ENCODE measurements at regions of chr7 and their contacts with region 1.

Region 1: GRCh38 chr7:157397731-157398691 is 61.2 kb downstream of the DNAJB6 start:
- DNase-seq: peak in 1 of 2 donors; percentile 62
- ATAC-seq: peak; percentile 54 to 87 (median 73)
- H3K4me3 ChIP-seq: peak overlapping the region in 2 of 10 donors; percentile 1 to 2
- H3K27ac ChIP-seq: peak overlapping the region; percentile 53 to 86 (median 77)
- H3K4me1 ChIP-seq: peaks cover 6 to 53% (median 35%) of the 10 kb centered on the region in 9 donors
- H3K27me3 ChIP-seq: no peaks in the 10 kb centered on the region
- CTCF ChIP-seq: peak in 8 of 9 donors; percentile 12 to 60 (median 46)

Region 2: DNA sequence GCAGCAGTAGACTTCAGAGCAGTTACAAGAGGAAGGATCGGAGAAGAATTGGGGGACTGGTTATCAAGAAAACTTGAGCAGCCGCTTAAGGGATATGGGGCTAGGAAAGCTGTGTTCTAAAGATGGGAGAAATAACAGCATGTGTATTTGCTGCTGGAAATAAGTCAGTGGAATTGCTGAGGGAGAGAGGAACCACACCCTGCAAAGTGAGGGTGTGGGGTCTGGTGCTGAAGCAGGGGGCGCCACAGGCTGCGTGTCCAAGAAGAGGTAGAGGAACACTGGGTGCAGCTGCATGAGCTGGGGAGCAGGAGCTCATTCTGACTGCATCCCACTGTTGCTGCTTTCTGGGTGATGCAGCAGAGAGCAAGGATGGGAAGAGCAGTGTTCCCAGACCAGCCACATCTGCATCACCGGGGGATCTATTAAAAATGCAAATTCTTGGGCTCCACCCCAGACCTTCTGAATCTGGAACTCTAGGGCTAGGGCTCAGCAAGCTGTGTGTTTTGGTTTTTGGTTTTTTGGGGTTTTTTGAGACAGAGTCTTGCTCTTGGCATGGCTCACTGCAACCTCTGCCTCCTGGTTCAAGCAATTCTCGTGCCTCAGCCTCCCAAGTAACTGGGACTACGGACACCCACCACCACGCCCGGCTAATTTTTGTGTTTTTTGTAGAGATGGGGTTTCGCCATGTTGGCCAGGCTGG is 158.3 kb before region 1 on chr7:
- intact Hi-C with region 1: loop called in 1 of 10 experiments (anchors 10 kb)
- DNase-seq: no peak
- ATAC-seq: peak in 1 of 8 donors; percentile 12
- H3K4me3 ChIP-seq: no peak overlapping the region
- H3K27ac ChIP-seq: no peak overlapping the region
- H3K4me1 ChIP-seq: no peaks in the 10 kb centered on the region
- H3K27me3 ChIP-seq: no peaks in the 10 kb centered on the region
- CTCF ChIP-seq: no peak

Region 3: DNA sequence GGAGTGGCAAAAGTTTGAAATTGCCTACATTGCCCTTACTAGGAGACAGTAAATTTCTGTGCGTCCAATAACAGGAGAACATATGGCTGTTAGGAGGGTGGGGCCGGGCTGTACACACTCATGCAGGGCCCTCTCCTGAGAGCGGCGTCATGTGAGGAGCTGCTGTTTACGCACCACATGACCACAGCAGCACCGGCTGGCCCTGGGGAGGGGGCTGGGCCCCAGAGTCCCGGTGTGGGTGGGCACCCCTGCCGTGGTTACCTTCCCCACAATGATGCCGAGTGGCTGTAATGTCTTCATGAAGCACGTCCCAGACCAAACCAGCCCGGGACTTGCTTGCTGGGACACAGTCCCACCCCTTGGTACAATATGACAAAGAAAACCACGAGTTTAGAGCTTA is 247.5 kb after region 1 on chr7:
- intact Hi-C with region 1: no loop called
- DNase-seq: no peak
- ATAC-seq: no peak
- H3K4me3 ChIP-seq: no peak overlapping the region
- H3K27ac ChIP-seq: no peak overlapping the region
- H3K4me1 ChIP-seq: no peaks in the 10 kb centered on the region
- H3K27me3 ChIP-seq: peaks cover 0 to 7% (median 0%) of the 10 kb centered on the region in 7 donors
- CTCF ChIP-seq: no peak

Measured in heart right ventricle (tissue), 16 donors.